Activated CD4-positive, alpha-beta T cell treated with anti-CD3 and anti-CD28 coated beads, Interleukin-2, amount 10 ng/mL, durations not matched to agents 24 days and 14 days (primary cell): ENCODE measurements at regions of chr22 and their contacts with region 1.

Region 1: DNA sequence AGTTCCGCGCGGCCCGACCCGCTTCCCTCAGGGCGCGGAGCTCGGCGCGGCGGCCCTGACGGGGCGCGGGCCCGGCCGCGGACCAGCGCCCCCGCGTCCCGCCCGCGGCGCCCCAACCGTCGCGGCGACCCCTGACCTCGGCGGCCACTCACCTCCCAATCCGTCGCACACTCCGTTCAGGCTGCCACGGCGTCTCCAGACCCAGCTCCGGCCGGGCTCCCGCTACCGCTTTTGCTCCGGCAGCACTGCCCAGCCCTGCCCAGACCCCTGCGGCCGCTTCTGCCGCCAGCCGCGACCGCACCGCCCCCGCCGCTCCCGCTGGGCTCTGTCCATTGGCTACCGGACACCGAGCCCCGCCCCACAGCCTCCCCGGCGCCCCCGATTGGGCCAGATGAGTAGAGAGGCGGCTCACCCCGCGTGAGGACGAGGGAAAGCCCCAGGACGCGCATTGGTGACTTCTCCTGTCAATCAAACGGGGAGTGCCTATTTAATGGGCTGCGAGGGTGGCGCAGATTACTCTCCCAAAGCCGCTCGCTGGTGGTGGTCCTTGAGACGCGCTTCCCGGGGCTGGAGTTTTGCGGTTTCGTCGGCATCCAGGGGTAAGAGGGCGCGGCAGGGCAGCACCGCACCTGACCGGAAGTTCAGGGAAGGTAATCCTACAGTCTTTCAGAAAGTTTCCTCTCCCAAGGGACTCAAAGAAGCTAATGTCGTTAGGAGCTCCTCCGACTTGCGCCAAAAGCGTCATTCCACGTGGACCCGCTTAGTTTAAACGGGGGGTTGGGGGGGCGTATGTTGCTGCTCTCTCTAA is at the start of gene PACSIN2:
- DNase-seq: peak; percentile 100
- H3K4me3 Mint-ChIP-seq: peak within 1 kb of the TSS; percentile 95
- H3K27ac Mint-ChIP-seq: peak within 1 kb of the TSS; percentile 88
- H3K4me1 Mint-ChIP-seq: peaks cover 26% of the 10 kb centered on the region
- H3K27me3 Mint-ChIP-seq: peaks cover 8% of the 10 kb centered on the region
- total RNA-seq, gene PACSIN2: 32.5 and 33.0 TPM in 2 replicates

Region 2: DNA sequence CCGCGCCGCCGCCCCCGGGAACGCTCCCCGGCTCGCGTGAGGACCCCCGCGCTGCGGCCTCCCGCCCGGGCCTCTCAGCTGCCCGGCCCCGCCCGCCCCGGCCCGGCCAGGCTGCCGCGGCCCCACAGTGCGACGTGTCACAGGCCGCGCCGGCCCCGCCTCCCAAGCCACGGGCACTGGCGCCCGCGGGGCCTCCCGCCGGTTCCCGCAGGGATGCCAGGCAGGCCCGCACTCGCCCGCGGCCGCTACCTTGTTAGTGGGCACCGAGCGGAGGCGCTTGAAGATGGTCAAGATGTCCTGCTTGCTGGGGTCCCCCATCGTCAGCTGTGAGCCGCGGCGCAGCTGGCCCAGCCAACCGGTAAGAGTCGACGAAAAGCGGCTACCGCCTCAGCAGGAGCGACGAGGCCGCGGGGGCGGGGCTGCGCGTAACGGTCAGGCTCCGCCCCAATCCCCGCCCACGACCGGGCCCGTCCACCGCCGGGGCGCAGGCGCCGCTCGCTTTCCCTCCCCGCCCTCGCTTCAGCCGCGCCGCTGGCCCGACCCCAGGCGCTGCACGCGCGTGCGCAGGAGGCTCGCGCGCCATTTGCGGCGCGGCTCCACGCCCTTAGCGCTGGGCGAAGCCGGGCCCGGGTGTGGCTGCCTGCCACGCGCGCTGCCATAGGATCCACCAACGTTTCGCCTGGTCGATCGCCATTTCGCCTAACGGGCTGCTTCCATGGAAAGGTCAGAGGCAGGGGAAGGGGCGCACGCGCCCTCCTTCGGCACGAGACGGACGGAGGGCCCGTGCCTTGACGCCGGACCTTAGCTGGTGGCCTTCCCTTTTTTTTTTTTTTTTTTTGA is 158.0 kb before region 1 on chr22 and contains the start of gene ARFGAP3:
- intact Hi-C with region 1: loop called (anchors 5 kb)
- DNase-seq: peak; percentile 99
- H3K4me3 Mint-ChIP-seq: peak within 1 kb of the TSS; percentile 95
- H3K27ac Mint-ChIP-seq: peak within 1 kb of the TSS; percentile 95
- H3K4me1 Mint-ChIP-seq: peaks cover 9% of the 10 kb centered on the region
- H3K27me3 Mint-ChIP-seq: peaks cover 5% of the 10 kb centered on the region
- total RNA-seq, gene ARFGAP3: 33.2 and 34.8 TPM in 2 replicates

Region 3: GRCh38 chr22:43001271-43002201 is 13.5 kb before region 1 on chr22:
- intact Hi-C with region 1: loop called (anchors 1 kb)
- DNase-seq: peak; percentile 67
- H3K4me3 Mint-ChIP-seq: peak overlapping the region; percentile 52
- H3K27ac Mint-ChIP-seq: peak overlapping the region; percentile 67
- H3K4me1 Mint-ChIP-seq: peaks cover 69% of the 10 kb centered on the region
- H3K27me3 Mint-ChIP-seq: no peaks in the 10 kb centered on the region